Heart right ventricle (tissue), 16 donors: ENCODE measurements at regions of chr17 and their contacts with region 1.

Region 1: DNA sequence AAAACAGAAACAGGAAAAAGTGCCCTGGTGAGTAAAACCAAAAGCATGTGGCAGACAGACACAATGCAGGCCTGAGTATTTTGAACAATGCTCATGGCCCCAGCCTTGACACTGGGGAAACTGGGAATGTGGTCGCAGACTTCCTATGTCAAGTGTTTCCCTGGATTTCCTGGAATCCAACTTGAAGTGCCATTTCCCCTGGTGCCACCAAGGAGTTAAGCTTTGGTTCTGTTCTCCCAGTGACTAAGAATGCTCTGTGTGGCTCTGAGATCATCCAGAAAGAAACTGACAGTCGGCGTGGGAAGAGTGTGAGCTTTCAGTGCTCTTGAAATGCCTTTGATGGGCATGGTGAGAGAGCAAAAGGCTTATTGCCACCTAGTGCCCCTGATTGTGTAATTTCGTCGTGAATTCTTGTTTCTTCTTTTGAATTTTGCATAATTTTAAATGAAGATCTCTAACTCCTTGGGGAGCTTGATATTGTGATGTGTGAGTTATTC is 96.0 kb downstream of the YPEL2 start:
- DNase-seq: peak in 1 of 2 donors; percentile 63
- ATAC-seq: peak; percentile 24 to 60 (median 49)
- H3K4me3 ChIP-seq: no peak overlapping the region
- H3K27ac ChIP-seq: peak overlapping the region; percentile 75 to 98 (median 93)
- H3K4me1 ChIP-seq: peaks cover 28 to 71% (median 66%) of the 10 kb centered on the region in 9 donors
- H3K27me3 ChIP-seq: no peaks in the 10 kb centered on the region
- CTCF ChIP-seq: peak in 3 of 9 donors; percentile 22 to 29 (median 23)

Region 2: DNA sequence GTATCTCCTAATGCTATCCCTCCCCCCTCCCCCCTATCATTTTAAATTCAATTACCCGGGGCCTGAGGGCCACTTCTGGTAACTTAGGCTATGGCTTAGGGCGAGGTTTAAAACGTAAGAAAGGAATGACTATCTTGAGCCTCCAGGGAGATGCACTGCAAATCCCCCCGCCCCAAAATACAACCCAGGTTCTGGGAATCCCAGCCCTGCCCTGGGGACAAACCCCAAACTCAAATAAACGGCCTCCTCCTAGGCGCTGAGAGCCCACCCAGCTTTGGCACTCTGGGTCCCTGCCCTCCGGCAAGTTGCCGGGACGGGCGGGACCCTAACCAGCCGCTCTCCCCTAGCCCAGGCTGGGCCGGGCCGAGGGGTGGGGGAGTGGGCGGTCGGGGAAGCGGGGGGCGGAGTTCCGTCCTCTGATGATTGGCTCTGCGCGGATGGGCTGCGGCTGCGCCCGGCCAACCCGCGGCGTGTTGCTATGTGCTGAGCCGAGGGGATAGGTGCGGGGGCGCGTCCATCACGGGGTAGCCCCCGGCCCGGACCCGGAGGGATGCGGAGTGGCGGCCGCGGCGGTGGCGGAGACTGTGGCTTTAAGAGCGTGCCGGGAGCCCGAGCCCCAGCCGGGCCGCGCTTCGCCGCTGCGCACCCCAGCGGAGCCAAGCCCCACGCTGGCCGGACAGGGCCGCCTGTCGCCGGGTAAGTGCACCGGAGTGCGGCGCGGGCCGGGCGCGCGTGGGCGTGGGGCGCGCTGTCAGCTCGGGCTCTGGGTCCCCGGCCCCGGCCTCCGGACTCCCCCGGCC is 96.1 kb before region 1 on chr17 and contains the start of gene YPEL2:
- intact Hi-C with region 1: loop called in 7 of 10 experiments (anchors 2 to 10 kb)
- DNase-seq: peak; percentile 98
- ATAC-seq: peak; percentile 92 to 96 (median 94)
- H3K4me3 ChIP-seq: peak within 1 kb of the TSS; percentile 88 to 99 (median 98)
- H3K27ac ChIP-seq: peak within 1 kb of the TSS; percentile 89 to 99 (median 97)
- H3K4me1 ChIP-seq: peaks cover 9 to 81% (median 76%) of the 10 kb centered on the region in 9 donors
- H3K27me3 ChIP-seq: no peaks in the 10 kb centered on the region
- CTCF ChIP-seq: no peak
- total RNA-seq, gene YPEL2: 12.0 to 57.1 (median 42.0) TPM

Region 3: GRCh38 chr17:59355696-59356325 is 71.7 kb before region 1 on chr17:
- intact Hi-C with region 1: no loop called
- DNase-seq: no peak
- ATAC-seq: peak in 6 of 8 donors; percentile 35 to 62 (median 58)
- H3K4me3 ChIP-seq: no peak overlapping the region
- H3K27ac ChIP-seq: peak overlapping the region in 7 of 10 donors; percentile 23 to 74 (median 45)
- H3K4me1 ChIP-seq: peaks cover 26 to 100% (median 90%) of the 10 kb centered on the region in 9 donors
- H3K27me3 ChIP-seq: no peaks in the 10 kb centered on the region
- CTCF ChIP-seq: no peak

Region 4: GRCh38 chr17:59366773-59367657 is 60.5 kb before region 1 on chr17:
- intact Hi-C with region 1: loop called in 6 of 10 experiments (anchors 5 to 10 kb)
- DNase-seq: peak in 1 of 2 donors; percentile 71
- ATAC-seq: peak; percentile 71 to 85 (median 81)
- H3K4me3 ChIP-seq: peak overlapping the region in 1 of 10 donors; percentile 10
- H3K27ac ChIP-seq: peak overlapping the region; percentile 89 to 97 (median 92)
- H3K4me1 ChIP-seq: peaks cover 63 to 100% (median 99%) of the 10 kb centered on the region in 9 donors
- H3K27me3 ChIP-seq: no peaks in the 10 kb centered on the region
- CTCF ChIP-seq: no peak

Region 5: GRCh38 chr17:59372138-59372857 is 55.2 kb before region 1 on chr17:
- intact Hi-C with region 1: loop called in 7 of 10 experiments (anchors 5 to 10 kb)
- DNase-seq: peak in 1 of 2 donors; percentile 80
- ATAC-seq: peak; percentile 69 to 88 (median 84)
- H3K4me3 ChIP-seq: peak overlapping the region in 4 of 10 donors; percentile 4 to 10 (median 6)
- H3K27ac ChIP-seq: peak overlapping the region; percentile 89 to 97 (median 92)
- H3K4me1 ChIP-seq: peaks cover 69 to 100% (median 99%) of the 10 kb centered on the region in 9 donors
- H3K27me3 ChIP-seq: no peaks in the 10 kb centered on the region
- CTCF ChIP-seq: no peak

Region 6: DNA sequence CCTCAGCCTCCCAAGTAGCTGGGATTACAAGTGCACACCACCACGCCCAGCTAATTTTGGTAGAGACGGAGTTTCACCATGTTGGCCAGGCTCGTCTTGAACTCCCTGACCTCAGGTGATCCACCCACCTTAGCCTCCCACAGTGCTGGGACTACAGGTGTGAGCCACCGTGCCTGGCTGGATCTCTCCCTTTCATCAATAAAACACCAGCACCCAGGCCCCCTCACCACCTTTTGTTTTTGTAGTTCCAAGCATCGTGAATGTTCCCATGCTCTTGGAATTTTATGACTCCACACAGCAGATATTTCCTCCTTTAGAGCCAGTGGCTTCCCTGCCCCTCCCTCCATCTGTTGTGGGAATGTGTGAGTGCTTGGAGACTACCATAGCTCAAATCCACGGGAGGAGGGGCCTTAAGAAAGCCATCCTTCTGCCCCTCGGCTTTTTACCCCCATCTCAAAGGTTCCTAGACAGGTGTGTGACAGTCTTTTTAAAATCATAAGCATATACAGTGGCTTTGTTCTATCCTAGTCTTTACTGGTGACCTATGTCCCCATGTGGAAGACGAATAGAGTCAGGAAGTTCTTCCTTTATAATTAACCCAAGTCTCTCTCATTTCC is 48.9 kb before region 1 on chr17:
- intact Hi-C with region 1: loop called in 6 of 10 experiments (anchors 5 to 10 kb)
- DNase-seq: peak in 1 of 2 donors; percentile 39
- ATAC-seq: peak in 6 of 8 donors; percentile 20 to 48 (median 42)
- H3K4me3 ChIP-seq: peak overlapping the region in 1 of 10 donors; percentile 3
- H3K27ac ChIP-seq: peak overlapping the region; percentile 11 to 97 (median 90)
- H3K4me1 ChIP-seq: peaks cover 52 to 100% (median 92%) of the 10 kb centered on the region in 9 donors
- H3K27me3 ChIP-seq: no peaks in the 10 kb centered on the region
- CTCF ChIP-seq: no peak

Region 7: GRCh38 chr17:59387351-59388068 is 40.0 kb before region 1 on chr17:
- intact Hi-C with region 1: loop called in 2 of 10 experiments (anchors 5 kb)
- DNase-seq: no peak
- ATAC-seq: peak in 6 of 8 donors; percentile 23 to 69 (median 50)
- H3K4me3 ChIP-seq: no peak overlapping the region
- H3K27ac ChIP-seq: peak overlapping the region in 8 of 10 donors; percentile 9 to 73 (median 68)
- H3K4me1 ChIP-seq: peaks cover 12 to 85% (median 44%) of the 10 kb centered on the region in 9 donors
- H3K27me3 ChIP-seq: no peaks in the 10 kb centered on the region
- CTCF ChIP-seq: no peak

Region 8: GRCh38 chr17:59406808-59407429 is 20.6 kb before region 1 on chr17:
- intact Hi-C with region 1: no loop called
- DNase-seq: peak in 1 of 2 donors; percentile 37
- ATAC-seq: peak; percentile 43 to 90 (median 77)
- H3K4me3 ChIP-seq: no peak overlapping the region
- H3K27ac ChIP-seq: peak overlapping the region in 9 of 10 donors; percentile 39 to 74 (median 66)
- H3K4me1 ChIP-seq: peaks cover 6 to 41% (median 19%) of the 10 kb centered on the region in 9 donors
- H3K27me3 ChIP-seq: no peaks in the 10 kb centered on the region
- CTCF ChIP-seq: no peak